Heart right ventricle (tissue), 16 donors: ENCODE measurements at regions of chr16 and their contacts with region 1.

Region 1: GRCh38 chr16:58459344-58460218 is 40.4 kb upstream of the NDRG4 start:
- DNase-seq: peak in 1 of 2 donors; percentile 54
- ATAC-seq: peak in 3 of 8 donors; percentile 38 to 46 (median 43)
- H3K4me3 ChIP-seq: no peak overlapping the region
- H3K27ac ChIP-seq: peak overlapping the region in 7 of 10 donors; percentile 3 to 96 (median 51)
- H3K4me1 ChIP-seq: peaks cover 0 to 47% (median 15%) of the 10 kb centered on the region in 9 donors
- H3K27me3 ChIP-seq: peaks cover 0 to 40% (median 8%) of the 10 kb centered on the region in 7 donors
- CTCF ChIP-seq: no peak

Region 2: GRCh38 chr16:58418601-58419000 is 41.0 kb before region 1 on chr16:
- intact Hi-C with region 1: loop called in 2 of 10 experiments (anchors 2 to 5 kb)
- DNase-seq: peak; percentile 64 to 76
- ATAC-seq: peak; percentile 73 to 87 (median 85)
- H3K4me3 ChIP-seq: no peak overlapping the region
- H3K27ac ChIP-seq: peak overlapping the region; percentile 73 to 95 (median 92)
- H3K4me1 ChIP-seq: peaks cover 0 to 59% (median 18%) of the 10 kb centered on the region in 9 donors
- H3K27me3 ChIP-seq: peaks cover 0 to 6% (median 0%) of the 10 kb centered on the region in 7 donors
- CTCF ChIP-seq: no peak

Region 3: DNA sequence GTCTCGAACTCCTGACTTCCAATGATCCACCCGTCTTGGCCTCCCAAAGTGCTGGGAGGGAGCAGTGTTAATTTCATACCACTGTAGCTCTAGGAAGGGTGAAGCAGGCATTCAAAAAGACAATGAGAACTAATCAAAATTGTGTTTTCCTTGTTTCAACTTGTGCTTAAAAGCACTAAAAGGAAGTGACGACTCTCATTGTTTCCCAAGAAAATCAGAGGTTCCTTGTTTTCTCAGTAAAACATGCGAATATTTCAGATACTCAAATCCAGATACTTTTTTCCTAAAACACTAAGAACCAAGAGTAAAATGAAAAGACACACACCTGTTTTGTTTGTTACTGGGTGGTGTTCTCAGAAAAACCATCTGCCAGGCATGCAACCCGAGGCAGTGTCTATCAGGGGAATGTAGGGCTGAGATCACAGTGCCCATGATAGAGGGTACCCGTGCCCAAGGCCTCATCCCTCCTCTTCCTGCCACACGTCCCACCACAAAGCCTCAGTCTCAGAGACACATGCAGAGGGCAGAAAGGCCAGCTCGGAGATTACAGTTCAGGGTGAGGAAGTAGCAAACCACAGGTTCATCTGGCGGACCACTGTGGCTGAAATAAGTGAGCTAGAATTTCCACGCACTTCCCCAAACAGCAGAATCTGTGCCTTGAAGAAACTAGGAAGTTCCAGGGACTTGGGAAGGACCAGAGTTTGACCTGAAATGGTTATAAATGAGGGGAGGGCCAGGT is 33.7 kb before region 1 on chr16:
- intact Hi-C with region 1: loop called in 1 of 10 experiments (anchors 5 kb)
- DNase-seq: no peak
- ATAC-seq: peak in 7 of 8 donors; percentile 16 to 61 (median 46)
- H3K4me3 ChIP-seq: peak overlapping the region in 1 of 10 donors; percentile 21
- H3K27ac ChIP-seq: peak overlapping the region; percentile 58 to 92 (median 74)
- H3K4me1 ChIP-seq: peaks cover 0 to 48% (median 21%) of the 10 kb centered on the region in 9 donors
- H3K27me3 ChIP-seq: peaks cover 0 to 26% (median 0%) of the 10 kb centered on the region in 7 donors
- CTCF ChIP-seq: no peak